Spleen (tissue), 13 donors: ENCODE measurements at regions of chr4 and their contacts with region 1.

Region 1: GRCh38 chr4:157992038-157992705 is 180.7 kb downstream of the GASK1B start:
- DNase-seq: no peak
- H3K4me3 ChIP-seq: peak overlapping the region in 4 of 8 donors; percentile 5 to 55 (median 18)
- H3K27ac ChIP-seq: peak overlapping the region; percentile 13 to 81 (median 70)
- H3K4me1 ChIP-seq: peaks cover 0 to 17% (median 10%) of the 10 kb centered on the region in 6 donors
- H3K27me3 ChIP-seq: no peaks in the 10 kb centered on the region
- CTCF ChIP-seq: peak in 10 of 11 experiments; percentile 21 to 74 (median 60)
- POLR2A ChIP-seq: no peak

Region 2: DNA sequence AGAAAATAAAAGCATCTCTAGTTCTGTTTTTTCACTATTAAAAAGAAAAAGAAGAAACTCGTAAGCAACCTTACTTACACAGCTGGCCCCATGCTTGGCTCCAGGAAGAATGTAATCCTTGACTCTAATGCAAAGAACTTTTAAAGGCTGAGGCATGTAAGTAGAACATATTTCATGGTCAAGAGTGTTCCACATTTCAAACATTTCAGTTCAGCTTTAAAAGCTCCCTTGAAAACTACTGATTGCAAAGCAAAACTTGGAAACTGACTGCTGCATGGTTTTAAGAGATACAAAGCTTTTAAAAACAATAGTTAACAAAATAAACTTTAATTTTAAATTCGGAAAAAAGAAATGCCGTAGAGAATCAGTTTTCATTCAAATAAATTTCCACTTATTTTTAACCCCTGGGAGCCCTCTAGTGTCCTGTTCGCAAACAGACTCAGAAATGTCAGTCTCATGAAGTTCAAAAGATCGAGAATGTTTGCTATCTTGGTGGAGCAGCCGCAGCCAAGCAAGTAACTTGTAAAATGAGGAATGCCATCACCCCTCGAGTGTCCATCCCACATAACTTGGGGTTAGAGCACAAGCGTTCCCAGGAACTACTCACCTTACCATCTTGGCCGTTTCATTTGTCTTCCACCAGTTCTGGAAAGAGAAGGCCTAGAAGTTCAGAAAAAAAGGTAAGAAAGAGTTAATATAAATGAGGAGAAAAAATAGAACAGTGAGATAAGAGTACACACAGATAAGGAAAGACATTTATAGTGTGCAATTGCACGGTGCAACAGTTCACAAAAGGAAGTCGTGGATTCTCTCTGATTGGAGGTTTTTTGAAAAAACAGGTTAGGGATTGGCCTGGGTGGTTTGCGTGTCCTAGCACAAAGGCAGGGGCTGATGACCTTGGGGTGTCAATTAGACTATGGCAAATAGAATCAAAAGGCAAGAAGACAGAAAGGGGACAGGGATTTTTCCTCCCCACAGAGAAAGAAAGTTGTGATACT is 180.4 kb after region 1 on chr4 and contains the start of gene GASK1B:
- intact Hi-C with region 1: loop called (anchors 10 kb)
- DNase-seq: no peak
- H3K4me3 ChIP-seq: peak within 1 kb of the TSS in 7 of 8 donors; percentile 0 to 69 (median 44)
- H3K27ac ChIP-seq: peak within 1 kb of the TSS; percentile 8 to 79 (median 52)
- H3K4me1 ChIP-seq: peaks cover 0 to 62% (median 12%) of the 10 kb centered on the region in 6 donors
- H3K27me3 ChIP-seq: peaks cover 0 to 29% (median 11%) of the 10 kb centered on the region in 7 donors
- CTCF ChIP-seq: peak in 7 of 11 experiments; percentile 5 to 58 (median 34)
- POLR2A ChIP-seq: no peak
- total RNA-seq, gene GASK1B: 22.0 to 51.3 (median 33.1) TPM